KBM-7 (cell line): ENCODE measurements at regions of chr2 and their contacts with region 1.

Region 1: GRCh38 chr2:176638167-176639015 is 369.1 kb downstream of the MTX2 start:
- DNase-seq: peak; percentile 56

Region 2: GRCh38 chr2:176126929-176127773 is 511.2 kb before region 1 on chr2:
- in situ Hi-C with region 1: loop called (anchors 10 kb)
- DNase-seq: peak; percentile 61

Region 3: DNA sequence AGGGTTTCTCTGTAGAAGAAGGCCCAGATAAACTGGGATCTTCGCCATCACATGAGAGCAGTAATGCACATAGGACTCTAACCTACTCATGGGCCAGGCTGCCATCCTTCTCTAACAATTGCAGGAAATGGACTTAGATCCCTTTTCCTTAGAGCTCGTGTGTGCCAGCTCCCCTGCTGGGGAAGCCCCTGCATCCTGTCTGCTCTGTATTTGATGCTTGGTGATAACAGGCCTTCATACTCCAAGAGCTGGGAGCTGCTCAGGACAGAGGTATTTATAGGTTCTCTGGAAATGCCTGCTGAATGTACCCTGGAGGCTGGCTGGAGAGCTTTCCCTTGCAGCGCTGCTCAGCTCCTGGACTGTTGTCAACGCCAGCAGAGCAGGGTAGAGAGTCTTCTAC is 119.6 kb before region 1 on chr2:
- in situ Hi-C with region 1: no loop called
- DNase-seq: no peak